ENCODE measurements at regions of chr7 and their contacts with region 1.

Region 1: DNA sequence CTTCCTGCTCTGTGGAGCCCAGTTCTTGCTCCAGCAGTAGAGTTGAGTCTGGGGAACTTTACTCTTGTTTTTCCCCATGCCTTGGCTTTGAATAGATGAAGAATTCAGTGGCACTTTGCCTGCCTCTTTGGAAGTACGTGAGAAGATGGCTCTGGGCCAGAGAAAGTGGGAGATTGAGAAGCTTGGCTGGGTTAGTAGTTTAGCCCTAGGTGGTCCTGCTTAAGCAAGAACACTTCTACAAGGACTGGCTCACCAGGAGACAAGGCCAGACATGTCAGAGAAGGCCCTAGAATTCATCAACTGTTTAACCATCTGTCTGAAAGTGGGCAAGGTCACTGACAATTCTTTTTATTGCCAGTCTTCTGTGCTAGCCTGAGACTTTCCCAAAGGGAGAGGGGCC is 410.3 kb downstream of the TYW1 start:
- DNase-seq: no peak
- H3K4me3 ChIP-seq: no peak overlapping the region
- H3K27ac ChIP-seq: no peak overlapping the region
- H3K4me1 ChIP-seq: no peaks in the 10 kb centered on the region
- H3K27me3 ChIP-seq: no peaks in the 10 kb centered on the region
- CTCF ChIP-seq: no peak

Region 2: DNA sequence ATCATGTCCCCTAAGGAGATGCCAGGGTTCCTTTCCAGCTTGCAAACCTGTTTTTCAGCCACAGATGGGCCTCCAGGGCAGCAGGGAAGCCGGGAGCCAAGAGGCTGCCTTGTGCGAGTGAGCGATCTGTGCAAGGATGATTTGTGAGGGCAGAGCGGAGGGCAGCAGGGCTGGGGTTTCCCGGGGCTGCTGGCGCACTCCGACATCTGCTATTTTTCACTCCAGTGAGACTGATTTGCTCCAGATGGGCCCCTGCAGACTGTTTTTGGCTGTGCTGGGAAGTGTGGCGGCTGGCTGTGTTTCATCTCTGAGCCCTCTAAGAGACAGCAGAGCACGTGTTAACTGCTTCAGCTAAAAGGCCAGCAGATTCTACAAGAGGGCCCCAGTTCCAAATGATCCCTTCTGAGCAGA is 55.8 kb after region 1 on chr7:
- CTCF ChIA-PET with region 1: no interaction called
- dilution Hi-C with region 1: loop called (anchors 10 kb)
- in situ Hi-C with region 1: no loop called
- intact Hi-C with region 1: no loop called
- DNase-seq: no peak
- H3K4me3 ChIP-seq: no peak overlapping the region
- H3K27ac ChIP-seq: no peak overlapping the region
- H3K4me1 ChIP-seq: no peaks in the 10 kb centered on the region
- H3K27me3 ChIP-seq: no peaks in the 10 kb centered on the region
- CTCF ChIP-seq: no peak

Region 3: DNA sequence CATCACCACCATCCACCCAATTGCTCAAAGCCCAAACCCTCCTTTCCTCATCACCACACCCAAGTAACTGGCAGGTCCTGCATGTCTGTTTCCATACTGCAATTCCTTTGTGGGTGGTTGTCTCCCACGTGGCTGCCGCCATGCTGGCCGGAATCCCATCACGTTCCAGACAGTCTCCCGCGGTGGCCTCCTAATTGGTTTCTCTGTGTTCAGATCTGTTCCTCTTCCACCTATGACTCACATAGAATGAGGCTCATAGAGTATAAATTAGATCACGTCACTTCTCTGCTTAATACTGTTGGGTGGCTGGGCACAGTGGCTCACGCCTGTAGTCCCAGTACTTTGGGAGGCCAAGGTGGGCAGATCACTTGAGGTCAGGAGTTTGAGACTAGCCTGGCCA is 402.6 kb after region 1 on chr7:
- CTCF ChIA-PET with region 1: no interaction called
- dilution Hi-C with region 1: loop called (anchors 10 kb)
- in situ Hi-C with region 1: no loop called
- intact Hi-C with region 1: no loop called
- DNase-seq: no peak
- H3K4me3 ChIP-seq: no peak overlapping the region
- H3K27ac ChIP-seq: no peak overlapping the region
- H3K4me1 ChIP-seq: no peaks in the 10 kb centered on the region
- H3K27me3 ChIP-seq: no peaks in the 10 kb centered on the region
- CTCF ChIP-seq: no peak

Measured in mammary epithelial cell (primary cell).